ENCODE measurements at regions of chr16 and their contacts with region 1.

Region 1: GRCh38 chr16:58121132-58121531 is 8.0 kb downstream of the CFAP20 start:
- DNase-seq: no peak
- ATAC-seq: peak; percentile 4 to 8

Region 2: DNA sequence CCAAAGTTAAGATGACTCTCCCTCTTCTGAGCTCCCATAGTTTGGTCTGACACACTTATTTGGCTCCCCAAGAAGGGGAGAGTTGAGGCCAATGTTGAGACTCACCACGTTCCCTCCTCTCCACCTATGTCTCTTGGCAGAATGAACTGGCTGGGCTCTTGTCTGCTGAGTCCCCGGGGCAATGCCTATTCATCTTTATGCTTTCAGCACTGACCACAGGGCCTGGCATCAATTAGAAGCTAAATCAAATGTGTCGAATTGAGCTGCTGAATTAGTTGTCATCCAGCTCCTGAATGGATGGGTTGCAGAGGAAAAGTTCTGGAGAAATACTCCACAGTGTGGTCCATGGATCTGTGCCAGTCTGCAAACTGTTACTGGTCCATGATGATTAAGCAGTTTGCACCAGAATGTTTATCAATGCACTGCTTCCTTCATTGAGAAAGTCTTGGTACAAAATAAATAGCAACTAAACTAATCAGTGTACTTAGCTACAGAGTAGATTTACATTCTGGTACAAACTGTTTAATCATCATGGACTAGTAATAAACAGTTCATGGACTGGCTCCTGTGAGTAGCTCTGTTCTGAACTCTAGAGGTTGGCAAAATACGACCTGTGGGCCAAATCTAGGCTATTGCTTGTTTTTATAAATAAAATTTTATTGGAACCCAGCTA is 154.9 kb before region 1 on chr16:
- intact Hi-C with region 1: no loop called
- DNase-seq: no peak
- ATAC-seq: peak in 1 of 2 donors; percentile 80

Region 3: DNA sequence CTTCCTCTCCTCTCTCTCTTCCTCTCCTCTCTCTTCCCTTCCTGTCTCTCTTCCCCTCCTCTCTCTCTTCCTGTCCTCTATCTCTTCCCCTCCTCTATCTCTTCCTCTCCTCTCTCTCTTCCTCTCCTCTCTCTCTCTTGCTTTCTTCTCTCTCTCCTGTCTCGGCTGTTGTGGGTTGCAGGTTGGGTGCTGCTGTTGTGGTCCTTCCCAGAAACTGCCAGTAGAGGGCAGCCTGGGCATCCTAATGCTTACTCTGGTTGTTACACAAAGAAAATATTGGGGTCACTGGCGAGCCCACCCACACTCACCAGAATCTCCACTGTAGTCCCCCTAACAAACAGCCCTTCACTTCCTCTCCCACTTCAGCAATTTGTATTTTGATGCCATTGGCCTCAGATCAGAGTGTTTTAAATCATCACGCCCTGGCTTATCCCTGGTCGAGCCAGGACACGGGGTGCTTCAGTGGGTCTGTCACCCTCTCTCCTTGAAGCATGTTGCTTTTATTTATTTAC is 100.4 kb before region 1 on chr16:
- intact Hi-C with region 1: loop called (anchors 2 kb)
- DNase-seq: peak; percentile 59
- ATAC-seq: no peak

Region 4: GRCh38 chr16:58249780-58250478 is 128.8 kb after region 1 on chr16:
- intact Hi-C with region 1: no loop called
- DNase-seq: peak; percentile 79
- ATAC-seq: peak; percentile 98 to 99

Measured in left cardiac atrium (tissue), 4 donors.